H1 (cell line): ENCODE measurements at regions of chr7 and their contacts with region 1.

Region 1: DNA sequence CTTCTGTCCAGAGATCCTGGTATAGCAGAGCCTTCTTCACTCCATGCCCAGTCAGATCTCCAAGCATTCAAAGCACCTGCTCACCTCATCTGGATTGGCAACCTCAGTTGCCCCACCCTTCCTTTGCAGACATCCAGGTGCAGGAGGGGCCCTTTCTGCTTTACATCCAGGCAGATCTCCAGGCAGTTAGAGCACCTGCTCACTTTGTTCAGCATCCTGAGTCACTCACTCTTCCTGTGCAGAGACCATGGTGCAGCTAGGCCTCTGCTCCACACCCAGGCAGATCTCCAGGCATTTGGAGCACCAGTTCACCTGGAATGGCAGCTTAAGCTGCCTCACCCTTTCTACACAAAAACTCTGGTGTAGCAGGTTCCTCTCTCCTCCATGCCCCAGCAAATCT is 153.1 kb downstream of the CDK14 start:
- DNase-seq: no peak
- H3K4me3 ChIP-seq: no peak overlapping the region
- H3K27ac ChIP-seq: no peak overlapping the region
- H3K4me1 ChIP-seq: peaks cover 0 to 2% (median 0%) of the 10 kb centered on the region in 4 experiments; a peak in 2 of 7 replicates
- H3K27me3 ChIP-seq: no peaks in the 10 kb centered on the region
- CTCF ChIP-seq: no peak
- EP300 ChIP-seq: no peak
- POLR2A ChIP-seq: no peak
- RAD21 ChIP-seq: no peak

Region 2: DNA sequence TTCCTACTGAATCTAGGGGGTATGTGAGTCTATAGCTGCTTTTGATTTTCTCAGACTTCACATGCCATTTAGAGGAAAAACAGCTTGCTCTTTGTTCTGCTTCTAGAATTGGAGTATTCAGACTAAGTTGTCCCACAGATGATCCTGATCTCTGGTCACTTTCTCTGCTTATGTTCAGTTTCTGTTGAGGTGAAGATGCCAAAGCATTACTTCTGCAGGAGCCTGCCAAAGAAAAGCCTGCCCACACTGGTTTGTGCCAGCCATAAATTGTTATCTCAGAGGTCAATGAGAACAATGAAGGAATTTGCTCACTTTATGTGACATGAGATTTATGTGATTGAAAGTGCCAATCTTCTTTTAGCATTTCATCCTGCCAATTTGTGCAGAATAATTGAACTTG is 10.4 kb after region 1 on chr7:
- CTCF ChIA-PET with region 1: interaction called, 24 read pairs
- POLR2A ChIA-PET with region 1: interaction called, 3 read pairs
- DNase-seq: no peak
- H3K4me3 ChIP-seq: no peak overlapping the region
- H3K27ac ChIP-seq: no peak overlapping the region
- H3K4me1 ChIP-seq: peaks cover 0 to 3% (median 0%) of the 10 kb centered on the region in 4 experiments; a peak in 1 of 7 replicates
- H3K27me3 ChIP-seq: no peaks in the 10 kb centered on the region
- CTCF ChIP-seq: no peak
- EP300 ChIP-seq: no peak
- POLR2A ChIP-seq: no peak
- RAD21 ChIP-seq: no peak